ENCODE measurements at regions of chr9 and their contacts with region 1.

Region 1: DNA sequence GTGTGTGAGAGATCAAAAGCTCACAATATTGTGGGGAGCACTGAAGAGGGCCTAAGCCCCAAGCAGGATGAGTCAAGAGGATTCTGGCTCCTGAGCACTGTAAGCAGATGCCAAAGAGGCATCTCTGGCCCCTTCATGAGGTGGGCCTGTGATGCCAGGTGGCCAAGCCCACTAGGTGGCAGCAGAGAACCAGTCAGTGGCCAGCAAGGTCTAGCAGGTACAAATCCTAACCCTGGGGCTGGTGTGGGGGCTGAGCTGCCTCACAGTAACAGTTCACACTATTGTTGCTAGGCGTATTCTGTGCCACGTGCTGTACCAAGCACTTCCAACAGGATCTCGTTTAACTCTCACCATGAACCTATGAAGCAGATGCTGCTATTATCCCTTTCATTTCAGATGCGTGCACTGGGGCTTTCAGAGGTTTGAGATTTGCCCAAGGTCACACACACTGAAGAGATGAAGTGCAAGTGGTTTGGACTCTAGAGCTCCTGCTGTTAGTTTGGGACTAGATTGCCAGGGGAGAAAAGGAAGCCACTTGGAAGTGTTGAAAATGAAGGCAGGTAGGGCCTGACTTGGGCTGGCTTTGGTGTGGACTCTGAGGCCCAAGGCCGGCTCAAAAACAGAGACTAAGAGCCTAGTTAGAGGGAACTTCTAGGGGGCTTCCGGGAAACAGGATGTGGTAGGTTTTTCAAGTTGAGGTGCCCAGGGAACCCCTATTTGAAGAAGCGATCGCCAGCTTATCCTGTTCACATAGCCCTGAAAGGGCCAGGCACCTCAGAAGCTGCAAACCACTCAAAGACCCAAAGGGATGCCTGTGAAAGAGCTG is 4.4 kb upstream of the MLANA start:
- DNase-seq: peak; percentile 90
- H3K4me3 ChIP-seq: no peak overlapping the region
- H3K27ac ChIP-seq: no peak overlapping the region
- H3K4me1 ChIP-seq: no peaks in the 10 kb centered on the region
- H3K27me3 ChIP-seq: no peaks in the 10 kb centered on the region
- CTCF ChIP-seq: peak; percentile 51 to 86 (median 78)
- POLR2A ChIP-seq: no peak

Region 2: DNA sequence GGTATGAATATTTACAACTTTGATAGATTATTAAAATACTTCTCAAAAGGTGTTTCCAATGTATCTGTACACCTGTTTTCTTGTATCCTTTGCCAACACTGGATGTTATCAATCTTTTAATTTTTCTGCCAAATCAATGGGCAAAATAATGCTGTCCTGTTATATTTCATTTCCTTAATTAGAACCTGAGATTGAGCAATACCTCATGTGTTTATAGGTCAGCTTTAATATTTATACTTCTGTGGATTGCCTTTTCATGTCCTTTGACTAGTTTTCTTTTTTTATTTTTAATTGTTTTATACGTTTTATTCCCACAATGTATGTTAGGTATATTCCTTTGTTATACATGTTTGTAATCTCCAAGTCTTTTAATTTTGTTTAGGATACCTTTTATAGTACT is 823.7 kb before region 1 on chr9:
- intact Hi-C with region 1: no loop called
- DNase-seq: no peak
- H3K4me3 ChIP-seq: no peak overlapping the region
- H3K27ac ChIP-seq: no peak overlapping the region
- H3K4me1 ChIP-seq: no peaks in the 10 kb centered on the region
- H3K27me3 ChIP-seq: no peaks in the 10 kb centered on the region
- CTCF ChIP-seq: no peak
- POLR2A ChIP-seq: no peak

Region 3: GRCh38 chr9:5832543-5833529 is 53.5 kb before region 1 on chr9 and contains the start of gene ERMP1:
- intact Hi-C with region 1: no loop called
- DNase-seq: peak; percentile 91
- H3K4me3 ChIP-seq: peak within 1 kb of the TSS; percentile 81 to 84
- H3K27ac ChIP-seq: peak within 1 kb of the TSS; percentile 55 to 82
- H3K4me1 ChIP-seq: peaks cover 15% of the 10 kb centered on the region
- H3K27me3 ChIP-seq: no peaks in the 10 kb centered on the region
- CTCF ChIP-seq: peak; percentile 81 to 89 (median 82)
- POLR2A ChIP-seq: no peak
- total RNA-seq, gene ERMP1: 25.7 to 28.9 TPM

Region 4: GRCh38 chr9:5931657-5932056 is 45.3 kb after region 1 on chr9:
- intact Hi-C with region 1: no loop called
- DNase-seq: no peak
- H3K4me3 ChIP-seq: no peak overlapping the region
- H3K27ac ChIP-seq: no peak overlapping the region
- H3K4me1 ChIP-seq: no peaks in the 10 kb centered on the region
- H3K27me3 ChIP-seq: no peaks in the 10 kb centered on the region
- CTCF ChIP-seq: no peak
- POLR2A ChIP-seq: no peak

Region 5: GRCh38 chr9:5999443-6000101 is 113.2 kb after region 1 on chr9:
- intact Hi-C with region 1: no loop called
- DNase-seq: no peak
- H3K4me3 ChIP-seq: no peak overlapping the region
- H3K27ac ChIP-seq: no peak overlapping the region
- H3K4me1 ChIP-seq: no peaks in the 10 kb centered on the region
- H3K27me3 ChIP-seq: no peaks in the 10 kb centered on the region
- CTCF ChIP-seq: no peak
- POLR2A ChIP-seq: no peak

Region 6: GRCh38 chr9:6055213-6055612 is 168.9 kb after region 1 on chr9:
- intact Hi-C with region 1: loop called (anchors 10 kb)
- DNase-seq: peak; percentile 77
- H3K4me3 ChIP-seq: no peak overlapping the region
- H3K27ac ChIP-seq: no peak overlapping the region
- H3K4me1 ChIP-seq: no peaks in the 10 kb centered on the region
- H3K27me3 ChIP-seq: no peaks in the 10 kb centered on the region
- CTCF ChIP-seq: peak; percentile 67 to 85 (median 81)
- POLR2A ChIP-seq: no peak

Measured in testis (tissue), 5 donors.